PC-9 (cell line): ENCODE measurements at regions of chr13 and their contacts with region 1.

Region 1: GRCh38 chr13:78102121-78102677 is 183.6 kb upstream of the EDNRB start:
- DNase-seq: no peak
- H3K4me3 ChIP-seq: no peak overlapping the region
- H3K27ac ChIP-seq: no peak overlapping the region
- H3K4me1 ChIP-seq: no peaks in the 10 kb centered on the region
- H3K27me3 ChIP-seq: no peaks in the 10 kb centered on the region
- CTCF ChIP-seq: no peak

Region 2: DNA sequence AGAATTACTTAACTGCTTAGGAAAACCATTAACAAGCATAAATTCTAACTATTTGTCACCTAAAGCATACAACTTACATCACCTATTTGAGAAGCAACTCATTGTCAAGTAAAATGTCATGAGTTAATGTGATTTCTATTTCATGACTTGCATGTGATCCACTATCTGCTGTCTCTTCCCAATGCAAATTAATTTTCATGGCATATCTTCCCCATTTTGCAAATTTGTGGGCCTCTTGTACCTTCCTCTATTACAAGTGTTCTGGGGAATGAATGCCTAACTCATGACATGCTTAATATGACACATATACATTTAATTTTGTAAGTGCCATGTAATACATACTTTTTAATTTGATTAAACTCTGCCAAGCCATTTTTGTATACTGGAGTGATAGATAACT is 102.5 kb before region 1 on chr13:
- CTCF ChIA-PET with region 1: interaction called, 11 read pairs
- POLR2A ChIA-PET with region 1: no interaction called
- intact Hi-C with region 1: no loop called
- DNase-seq: no peak
- H3K4me3 ChIP-seq: no peak overlapping the region
- H3K27ac ChIP-seq: no peak overlapping the region
- H3K4me1 ChIP-seq: no peaks in the 10 kb centered on the region
- H3K27me3 ChIP-seq: no peaks in the 10 kb centered on the region
- CTCF ChIP-seq: no peak